HEK293 (cell line): ENCODE measurements at regions of chr6 and their contacts with region 1.

Region 1: DNA sequence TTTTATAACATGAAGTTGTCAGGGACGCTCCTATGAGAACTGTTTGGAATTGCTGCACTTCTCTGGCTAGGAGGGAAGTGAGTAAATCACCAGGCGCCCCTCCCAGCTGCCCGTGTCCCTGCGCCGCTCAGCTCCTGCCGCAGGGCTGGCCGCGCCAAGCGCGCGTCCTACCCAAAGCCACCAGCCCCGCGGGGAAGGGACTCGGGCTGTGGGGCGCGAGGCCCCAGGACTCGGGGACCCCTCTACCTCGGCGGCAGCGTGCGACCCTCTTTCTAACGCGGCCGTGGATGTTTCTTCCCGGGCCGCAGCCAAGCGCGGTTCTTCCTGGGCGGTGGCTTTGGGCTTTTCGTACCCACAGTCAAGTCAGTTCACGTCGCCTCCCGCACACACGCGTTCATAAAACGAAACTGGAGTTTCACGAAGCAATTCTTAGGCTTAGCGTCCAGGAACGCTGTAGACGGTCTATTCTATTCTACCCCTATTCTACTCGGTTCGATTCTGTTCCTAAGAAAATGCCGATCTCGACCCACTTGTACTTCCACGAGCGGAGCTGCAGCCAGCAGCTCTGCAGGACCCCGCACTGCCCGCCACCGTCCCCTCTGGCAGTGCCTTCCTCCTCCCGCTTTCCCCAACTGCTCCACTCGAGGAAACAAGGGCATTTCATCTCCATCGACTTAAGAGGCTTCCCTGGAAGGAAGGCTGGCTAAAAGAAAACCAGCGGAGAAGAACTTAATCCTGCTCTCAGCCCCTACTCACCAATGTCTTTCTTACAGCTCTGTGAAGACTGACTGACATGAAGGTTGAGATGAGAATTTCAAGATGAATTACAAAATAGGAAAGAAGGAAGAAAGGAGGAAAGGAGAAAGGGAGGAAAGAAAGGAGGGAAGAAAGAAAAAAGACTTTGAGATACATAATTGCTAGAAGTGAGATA is 15.4 kb downstream of the FOXC1 start:
- H3K4me3 ChIP-seq: peak overlapping the region; percentile 38
- H3K27ac ChIP-seq: peak overlapping the region; percentile 85; the same call in 1 of the 2 replicates
- H3K4me1 ChIP-seq: peaks cover 40% of the 10 kb centered on the region
- CTCF ChIP-seq: peak; percentile 19; the same call in 1 of the 2 replicates

Region 2: DNA sequence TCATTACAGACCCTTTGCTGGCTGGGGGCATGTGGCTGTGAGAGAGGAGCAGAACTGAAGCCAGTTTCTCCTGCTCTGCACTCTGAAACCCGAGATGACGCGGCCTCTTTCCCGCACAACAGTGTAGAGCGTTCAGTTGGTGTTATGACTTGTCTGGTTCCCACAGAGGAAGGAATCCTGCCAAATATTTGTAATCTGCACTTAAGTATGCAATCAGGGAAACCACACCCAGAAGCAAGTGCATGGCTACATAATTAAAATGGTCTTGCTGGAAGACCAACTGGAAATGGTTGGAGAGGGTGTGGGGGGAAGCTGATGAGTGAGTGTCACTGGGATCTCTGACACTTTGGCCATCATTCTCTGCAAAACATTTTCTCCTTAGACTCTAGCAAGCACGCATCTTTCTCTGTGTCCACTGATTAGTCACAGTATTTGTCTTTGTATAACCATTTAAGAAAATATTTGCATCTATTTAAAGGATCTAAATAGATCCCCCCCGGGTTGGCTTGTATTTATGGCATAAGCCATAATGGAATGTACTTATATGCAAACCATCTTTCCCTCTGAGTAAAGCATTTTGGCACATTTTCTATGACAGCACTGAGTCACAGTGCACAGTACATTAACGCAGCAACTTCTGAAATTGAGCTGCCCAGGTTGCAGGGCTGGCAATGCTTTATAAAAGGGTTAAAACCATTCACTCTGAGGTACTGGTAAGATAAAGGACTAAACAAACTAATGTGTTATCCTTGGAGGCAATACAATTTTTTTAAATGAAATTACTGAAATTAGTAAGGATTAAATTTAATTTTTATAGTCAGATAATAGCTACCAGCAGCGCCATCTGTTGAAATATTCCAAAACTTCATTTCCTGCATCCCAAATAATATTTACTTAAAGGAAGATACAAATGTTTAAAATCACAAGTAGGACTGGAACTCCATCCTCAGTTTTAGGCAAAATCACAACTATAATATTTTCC is 61.3 kb after region 1 on chr6:
- CTCF ChIA-PET with region 1: interaction called, 15 read pairs
- POLR2A ChIA-PET with region 1: interaction called, 4 read pairs
- H3K4me3 ChIP-seq: no peak overlapping the region
- H3K27ac ChIP-seq: peak overlapping the region; percentile 76
- H3K4me1 ChIP-seq: peaks cover 18% of the 10 kb centered on the region
- CTCF ChIP-seq: no peak; the same call in 1 of the 2 replicates

Region 3: DNA sequence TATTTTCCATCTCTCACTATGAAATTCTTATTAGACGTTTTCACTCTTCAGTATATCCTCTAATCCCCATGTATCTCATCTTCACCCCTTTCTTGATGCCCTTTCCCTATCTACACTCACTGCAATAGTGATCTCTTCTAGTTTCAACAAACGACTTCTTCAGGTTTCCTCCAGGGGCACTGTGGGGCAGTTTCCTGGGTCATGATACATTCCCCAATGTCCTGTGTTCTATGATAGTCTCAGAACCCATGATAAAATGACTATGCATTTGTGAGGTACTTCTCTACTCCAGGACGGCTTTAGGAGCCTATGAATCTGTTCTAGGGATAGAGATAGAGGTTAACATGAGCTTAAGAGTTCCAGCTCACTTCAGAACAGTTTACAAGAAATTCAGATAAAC is 167.9 kb after region 1 on chr6:
- CTCF ChIA-PET with region 1: no interaction called
- POLR2A ChIA-PET with region 1: no interaction called
- H3K4me3 ChIP-seq: no peak overlapping the region
- H3K27ac ChIP-seq: no peak overlapping the region
- H3K4me1 ChIP-seq: no peaks in the 10 kb centered on the region; the same call in 1 of the 2 replicates
- CTCF ChIP-seq: 0 out of 2 replicates have a peak, but pooled peaks have one; percentile 21